Activated T-helper 2 cell treated with anti-CD3 and anti-CD28 coated beads, Interferon-gamma antibody, Interleukin-2, Interleukin-4, amounts not matched to agents 10 μg/mL and 5 μg/mL and 100 μg/mL, durations not matched to agents 14 hours and 24 hours and 36 hours (primary cell): ENCODE measurements at regions of chr18 and their contacts with region 1.

Region 1: DNA sequence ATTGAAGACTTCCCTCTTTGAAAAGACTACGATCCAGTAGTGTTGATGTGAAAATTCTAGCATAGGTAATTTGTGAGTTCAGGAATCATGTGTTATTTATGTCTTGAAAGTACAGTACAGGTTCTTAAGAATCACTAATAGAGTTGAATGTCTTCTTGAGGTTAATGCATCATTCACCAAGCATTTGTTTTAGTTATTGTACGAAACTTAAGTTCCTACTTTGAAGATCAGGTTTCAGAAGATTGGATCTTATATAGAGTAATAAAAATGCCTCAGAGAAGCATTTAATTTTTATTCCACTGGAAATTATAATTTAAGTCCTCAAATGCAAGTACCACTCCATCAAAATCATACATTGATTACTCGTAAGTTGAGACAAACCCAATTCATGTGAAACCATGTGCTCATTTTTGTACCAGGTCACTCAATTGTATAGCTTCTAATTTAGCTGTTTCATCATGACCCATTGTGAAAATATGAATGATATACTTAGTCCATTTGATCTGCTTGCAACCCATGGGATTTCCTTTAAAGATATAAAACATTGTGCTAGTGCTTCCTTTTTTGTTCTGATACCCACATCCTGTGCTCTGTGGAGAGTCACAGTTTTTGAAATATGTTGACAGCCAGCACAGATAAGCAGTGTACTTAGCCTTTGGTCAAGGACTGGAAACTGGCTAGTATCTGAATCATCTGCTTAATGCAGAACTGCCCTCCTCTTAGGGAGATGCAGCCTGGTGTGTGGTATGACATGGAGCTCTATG is 22.5 kb upstream of the RAB27B start:
- DNase-seq: no peak
- H3K4me3 Mint-ChIP-seq: no peak overlapping the region
- H3K27ac Mint-ChIP-seq: peak overlapping the region; percentile 64
- H3K4me1 Mint-ChIP-seq: peaks cover 22% of the 10 kb centered on the region
- H3K27me3 Mint-ChIP-seq: peaks cover 22% of the 10 kb centered on the region

Region 2: GRCh38 chr18:54717673-54718407 is 87.9 kb before region 1 on chr18:
- intact Hi-C with region 1: loop called (anchors 1 kb)
- DNase-seq: peak; percentile 60
- H3K4me3 Mint-ChIP-seq: peak overlapping the region; percentile 66
- H3K27ac Mint-ChIP-seq: peak overlapping the region; percentile 4
- H3K4me1 Mint-ChIP-seq: peaks cover 49% of the 10 kb centered on the region
- H3K27me3 Mint-ChIP-seq: peaks cover 43% of the 10 kb centered on the region

Region 3: DNA sequence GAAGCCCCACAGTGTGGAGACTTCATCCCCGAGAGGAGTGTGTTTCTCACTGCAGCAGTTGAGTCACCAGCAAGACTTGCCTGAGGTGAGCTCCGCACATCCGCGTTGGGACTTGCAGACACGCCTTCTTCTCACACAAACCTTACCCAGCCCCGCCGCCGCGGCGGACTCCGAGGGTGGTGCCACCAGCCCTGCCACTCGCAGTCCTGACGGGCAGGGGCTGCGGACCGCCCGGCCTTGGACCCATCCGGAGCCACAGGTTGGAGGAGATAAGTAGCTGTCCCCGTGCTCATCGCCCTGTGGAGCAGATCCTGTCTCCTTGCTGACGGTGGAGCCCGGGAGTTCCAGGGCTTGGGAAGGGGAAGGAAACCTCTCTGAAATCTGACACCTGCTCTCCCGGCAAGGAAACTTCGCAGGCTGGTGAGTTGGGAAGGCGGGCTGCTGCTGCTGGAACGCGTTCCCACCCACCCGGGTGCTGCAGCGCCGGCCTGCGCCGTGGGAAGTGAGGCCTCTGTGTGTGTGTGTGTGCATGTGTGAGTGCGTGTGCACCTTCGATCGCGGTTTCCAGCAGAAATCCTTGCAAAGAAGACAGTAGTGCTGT is 22.6 kb after region 1 on chr18 and contains the start of gene RAB27B:
- intact Hi-C with region 1: loop called (anchors 2 kb)
- DNase-seq: peak; percentile 60
- H3K4me3 Mint-ChIP-seq: peak within 1 kb of the TSS; percentile 82
- H3K27ac Mint-ChIP-seq: peak within 1 kb of the TSS; percentile 3
- H3K4me1 Mint-ChIP-seq: peaks cover 19% of the 10 kb centered on the region
- H3K27me3 Mint-ChIP-seq: peaks cover 25% of the 10 kb centered on the region
- total RNA-seq, gene RAB27B: 0.75 and 0.92 TPM in 2 replicates

Region 4: GRCh38 chr18:54946149-54946581 is 140.4 kb after region 1 on chr18:
- intact Hi-C with region 1: loop called (anchors 5 kb)
- DNase-seq: no peak
- H3K4me3 Mint-ChIP-seq: peak overlapping the region; percentile 67
- H3K27ac Mint-ChIP-seq: peak overlapping the region; percentile 52
- H3K4me1 Mint-ChIP-seq: peaks cover 13% of the 10 kb centered on the region
- H3K27me3 Mint-ChIP-seq: peaks cover 16% of the 10 kb centered on the region

Region 5: GRCh38 chr18:55024568-55024967 is 218.8 kb after region 1 on chr18:
- intact Hi-C with region 1: no loop called
- DNase-seq: no peak
- H3K4me3 Mint-ChIP-seq: no peak overlapping the region
- H3K27ac Mint-ChIP-seq: no peak overlapping the region
- H3K4me1 Mint-ChIP-seq: no peaks in the 10 kb centered on the region
- H3K27me3 Mint-ChIP-seq: no peaks in the 10 kb centered on the region